ENCODE measurements at regions of chr2 and their contacts with region 1.

Region 1: GRCh38 chr2:168758970-168759820 is 43.2 kb upstream of the NOSTRIN start:
- DNase-seq: peak; percentile 33
- H3K4me3 ChIP-seq: no peak overlapping the region
- H3K27ac ChIP-seq: no peak overlapping the region
- H3K4me1 ChIP-seq: no peaks in the 10 kb centered on the region
- H3K27me3 ChIP-seq: no peaks in the 10 kb centered on the region
- CTCF ChIP-seq: peak in 3 of 4 experiments; percentile 56 to 74 (median 66)
- POLR2A ChIP-seq: no peak

Region 2: GRCh38 chr2:168210895-168211570 is 548.2 kb before region 1 on chr2:
- intact Hi-C with region 1: no loop called
- DNase-seq: peak; percentile 25
- H3K4me3 ChIP-seq: peak overlapping the region in 1 of 2 donors; percentile 3
- H3K27ac ChIP-seq: peak overlapping the region; percentile 59 to 72
- H3K4me1 ChIP-seq: peaks cover 2% of the 10 kb centered on the region
- H3K27me3 ChIP-seq: no peaks in the 10 kb centered on the region
- CTCF ChIP-seq: no peak
- POLR2A ChIP-seq: no peak

Region 3: DNA sequence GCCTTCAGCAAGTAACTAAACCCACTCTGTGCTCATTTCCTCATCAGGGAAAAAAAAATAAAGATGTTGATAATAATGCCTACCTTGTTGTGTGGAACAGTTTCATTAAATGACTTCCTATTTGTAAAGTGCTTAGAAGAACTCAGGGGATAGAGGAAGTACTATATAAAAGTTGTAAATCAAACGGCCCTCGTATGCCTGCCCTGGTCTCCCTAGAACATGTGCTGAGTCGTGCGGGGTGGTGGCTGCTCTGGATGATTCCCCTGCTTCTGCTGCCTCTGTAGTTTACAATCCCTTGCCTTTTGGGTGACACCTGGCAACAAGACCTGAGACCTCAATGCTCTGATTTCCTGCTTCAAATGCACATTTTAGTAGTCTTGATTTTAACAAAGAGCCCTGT is 133.1 kb before region 1 on chr2:
- intact Hi-C with region 1: no loop called
- DNase-seq: no peak
- H3K4me3 ChIP-seq: no peak overlapping the region
- H3K27ac ChIP-seq: no peak overlapping the region
- H3K4me1 ChIP-seq: no peaks in the 10 kb centered on the region
- H3K27me3 ChIP-seq: no peaks in the 10 kb centered on the region
- CTCF ChIP-seq: no peak
- POLR2A ChIP-seq: no peak

Region 4: DNA sequence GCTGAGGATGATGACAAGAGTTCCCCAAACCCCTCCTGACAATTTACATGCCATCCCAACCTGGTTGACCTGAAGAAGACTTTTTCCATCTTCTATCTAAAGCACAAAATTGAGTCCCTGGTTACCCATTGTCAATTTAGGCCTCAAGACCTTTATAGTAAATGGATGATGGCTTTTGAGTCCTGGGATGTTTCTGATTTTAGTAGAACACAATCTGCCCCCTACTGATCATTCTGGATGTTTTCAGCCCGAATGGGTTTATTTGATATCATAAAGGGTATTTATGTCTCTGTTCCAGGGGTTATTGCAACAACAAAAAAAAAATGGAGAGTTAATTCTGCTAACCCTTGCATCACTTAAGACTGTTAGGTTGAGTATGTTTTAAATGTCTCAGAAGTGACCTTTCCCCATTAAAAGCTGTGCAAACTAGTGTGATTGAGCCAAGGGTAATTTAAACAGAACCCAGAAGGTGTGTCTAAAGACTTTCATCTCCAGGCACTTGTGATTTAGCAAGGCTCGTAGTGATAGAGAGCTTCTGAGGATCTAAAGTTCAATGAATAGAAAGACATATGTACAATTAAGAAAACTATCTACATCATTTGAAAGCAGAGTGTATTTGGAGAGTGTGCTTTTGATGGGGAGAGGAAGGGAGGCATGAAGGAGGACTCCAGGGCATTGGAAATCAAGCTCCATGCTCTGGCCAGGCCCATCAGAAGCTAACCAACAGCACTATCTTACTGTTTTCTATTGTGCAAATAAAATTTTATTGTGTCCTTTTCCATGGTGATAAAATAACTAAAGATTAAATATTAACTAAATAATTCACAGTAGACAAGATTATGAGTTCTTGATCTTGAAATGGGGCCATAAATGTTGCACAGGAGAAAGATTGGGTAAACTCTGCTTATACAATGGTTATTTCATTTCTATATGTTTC is 53.4 kb before region 1 on chr2:
- intact Hi-C with region 1: loop called (anchors 10 kb)
- DNase-seq: no peak
- H3K4me3 ChIP-seq: no peak overlapping the region
- H3K27ac ChIP-seq: no peak overlapping the region
- H3K4me1 ChIP-seq: no peaks in the 10 kb centered on the region
- H3K27me3 ChIP-seq: no peaks in the 10 kb centered on the region
- CTCF ChIP-seq: peak in 2 of 4 experiments; percentile 16 to 19
- POLR2A ChIP-seq: no peak